GM12878 (cell line): ENCODE measurements at regions of chr7 and their contacts with region 1.

Region 1: GRCh38 chr7:90701021-90701420 is 104.9 kb downstream of the CDK14 start:
- DNase-seq: no peak
- ATAC-seq: peak; percentile 81
- H3K4me3 ChIP-seq: peak overlapping the region; percentile 58; the same call in 1 of the 2 replicates
- H3K27ac ChIP-seq: peak overlapping the region; percentile 47
- H3K4me1 ChIP-seq: peaks cover 4% of the 10 kb centered on the region
- H3K27me3 ChIP-seq: no peaks in the 10 kb centered on the region
- CTCF ChIP-seq: no peak
- EP300 ChIP-seq: no peak
- POLR2A ChIP-seq: no peak
- RAD21 ChIP-seq: no peak

Region 2: GRCh38 chr7:90536449-90536848 is 164.6 kb before region 1 on chr7:
- CTCF ChIA-PET with region 1: no interaction called
- POLR2A ChIA-PET with region 1: no interaction called
- RAD21 ChIA-PET with region 1: no interaction called
- SMC1A ChIA-PET with region 1: no interaction called
- in situ Hi-C with region 1: no loop called
- intact Hi-C with region 1: no loop called
- DNase-seq: peak; percentile 25
- ATAC-seq: peak; percentile 81
- H3K4me3 ChIP-seq: no peak overlapping the region
- H3K27ac ChIP-seq: no peak overlapping the region
- H3K4me1 ChIP-seq: peaks cover 4% of the 10 kb centered on the region; the same call in 1 of the 2 replicates
- H3K27me3 ChIP-seq: no peaks in the 10 kb centered on the region; a peak in 1 of 4 replicates
- CTCF ChIP-seq: no peak
- EP300 ChIP-seq: peak in 1 of 2 experiments; percentile 28; a peak in 1 of 4 replicates
- POLR2A ChIP-seq: no peak
- RAD21 ChIP-seq: no peak

Region 3: DNA sequence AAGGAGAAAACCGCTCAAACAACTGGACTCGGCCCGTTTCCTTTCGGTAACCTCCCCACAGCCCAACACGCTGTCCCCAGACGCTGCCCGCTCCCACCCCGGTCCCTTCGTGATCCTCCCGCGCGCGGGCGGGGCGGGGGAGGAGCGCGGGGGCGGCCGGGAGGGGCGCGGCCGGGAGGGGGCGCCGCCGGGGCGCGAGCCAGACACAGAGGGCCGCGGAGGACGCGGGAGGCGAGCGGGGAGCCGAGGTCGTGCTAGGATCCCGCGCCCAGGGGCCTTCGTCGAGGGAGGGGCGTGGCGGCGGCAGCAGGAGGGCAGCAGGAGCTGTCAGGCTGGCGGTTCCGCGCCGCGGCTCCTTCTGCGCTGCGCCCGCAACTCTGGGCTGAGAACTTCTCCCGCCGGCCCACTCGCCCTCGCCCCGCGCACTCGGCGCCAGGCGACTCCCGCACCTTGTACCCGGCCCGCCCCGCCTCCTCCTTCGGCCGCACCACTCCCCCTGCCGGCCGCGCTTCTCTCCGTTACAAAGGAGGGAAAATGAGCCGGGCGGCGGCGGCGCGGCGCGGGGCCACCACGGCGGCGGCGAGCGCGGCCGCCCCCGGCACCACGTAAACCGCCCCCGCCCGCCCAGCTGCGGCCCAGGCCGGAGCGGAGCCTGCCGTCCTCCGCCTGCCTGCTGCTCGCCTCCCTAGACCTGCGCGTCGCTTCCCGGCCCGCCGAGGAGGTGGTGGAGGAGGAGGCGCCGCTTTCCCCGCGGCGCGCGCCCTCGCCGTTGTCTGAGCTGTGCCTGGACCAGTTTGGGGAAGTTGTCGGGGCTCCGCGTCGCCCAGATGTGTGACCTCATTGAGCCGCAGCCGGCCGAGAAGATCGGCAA is 105.0 kb before region 1 on chr7 and contains the start of gene CDK14:
- CTCF ChIA-PET with region 1: interaction called, 6 read pairs
- POLR2A ChIA-PET with region 1: no interaction called
- RAD21 ChIA-PET with region 1: interaction called, 3 read pairs
- SMC1A ChIA-PET with region 1: interaction called, 10 read pairs
- in situ Hi-C with region 1: no loop called
- intact Hi-C with region 1: loop called (anchors 5 kb)
- DNase-seq: no peak
- ATAC-seq: peak; percentile 58
- H3K4me3 ChIP-seq: peak within 1 kb of the TSS; percentile 92
- H3K27ac ChIP-seq: peak within 1 kb of the TSS; percentile 55
- H3K4me1 ChIP-seq: peaks cover 10% of the 10 kb centered on the region
- H3K27me3 ChIP-seq: no peaks in the 10 kb centered on the region
- CTCF ChIP-seq: peak in 2 of 3 experiments; percentile 29 to 33; a peak in 3 of 6 replicates
- EP300 ChIP-seq: no peak
- POLR2A ChIP-seq: peak; percentile 78
- RAD21 ChIP-seq: peak; percentile 44; the same call in 1 of the 2 replicates
- polyA plus RNA-seq, gene CDK14: 6.5 to 7.3 TPM

Region 4: GRCh38 chr7:90661290-90662151 is 39.5 kb before region 1 on chr7:
- CTCF ChIA-PET with region 1: interaction called, 3 read pairs
- POLR2A ChIA-PET with region 1: no interaction called
- RAD21 ChIA-PET with region 1: interaction called, 3 read pairs
- SMC1A ChIA-PET with region 1: interaction called, 16 read pairs
- in situ Hi-C with region 1: no loop called
- intact Hi-C with region 1: no loop called
- DNase-seq: no peak
- ATAC-seq: peak; percentile 50
- H3K4me3 ChIP-seq: no peak overlapping the region
- H3K27ac ChIP-seq: peak overlapping the region; percentile 11; the same call in 1 of the 2 replicates
- H3K4me1 ChIP-seq: peaks cover 31% of the 10 kb centered on the region
- H3K27me3 ChIP-seq: no peaks in the 10 kb centered on the region
- CTCF ChIP-seq: no peak
- EP300 ChIP-seq: no peak
- POLR2A ChIP-seq: no peak
- RAD21 ChIP-seq: no peak

Region 5: DNA sequence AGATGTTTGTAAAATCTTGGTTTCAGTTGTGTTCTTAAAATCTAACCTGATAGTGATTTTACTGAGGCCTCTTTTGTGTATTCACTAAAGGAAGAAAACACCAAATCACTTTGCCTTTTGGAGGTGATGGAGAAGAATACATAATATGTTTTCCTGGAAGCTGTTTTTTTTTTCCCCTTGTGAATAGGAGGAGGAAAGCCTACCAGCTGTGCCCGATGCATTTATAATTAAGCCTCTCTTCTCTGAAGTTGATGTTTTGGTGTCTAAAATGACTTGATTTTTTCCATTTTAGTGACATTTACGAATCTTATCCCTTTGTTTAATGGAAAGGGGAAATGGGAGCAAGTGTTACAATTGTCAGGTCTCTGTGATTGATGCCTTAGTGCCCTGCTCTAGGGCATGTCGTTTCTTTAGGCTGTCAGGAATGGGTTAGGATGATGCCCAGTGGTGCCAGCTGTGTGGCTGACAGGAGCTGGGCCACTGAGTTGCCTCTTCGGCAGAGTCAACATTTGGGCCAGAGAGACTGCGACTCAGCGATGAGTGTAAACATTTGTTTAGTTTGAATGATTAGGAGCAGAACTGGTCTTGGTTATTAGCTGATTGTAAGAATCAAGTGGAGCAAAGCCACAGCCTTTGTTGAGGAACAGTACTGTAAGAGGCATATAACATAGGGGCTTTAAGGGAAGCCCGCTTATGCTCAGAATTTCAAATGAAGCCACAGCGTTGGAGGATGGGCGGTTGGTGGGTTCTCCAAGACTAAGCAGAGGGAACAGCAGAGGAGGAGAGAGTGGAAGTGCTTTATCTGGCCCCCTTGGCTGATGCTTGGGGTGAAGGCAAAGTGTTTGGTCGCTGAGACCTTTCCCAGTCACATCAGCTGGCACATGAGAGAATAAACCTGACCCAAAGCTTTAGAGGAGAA is 23.3 kb before region 1 on chr7:
- CTCF ChIA-PET with region 1: interaction called, 3 read pairs
- POLR2A ChIA-PET with region 1: no interaction called
- RAD21 ChIA-PET with region 1: no interaction called
- SMC1A ChIA-PET with region 1: interaction called, 10 read pairs
- in situ Hi-C with region 1: no loop called
- intact Hi-C with region 1: no loop called
- DNase-seq: no peak
- ATAC-seq: no peak; the same call in 2 of the 3 replicates
- H3K4me3 ChIP-seq: no peak overlapping the region
- H3K27ac ChIP-seq: no peak overlapping the region
- H3K4me1 ChIP-seq: no peaks in the 10 kb centered on the region
- H3K27me3 ChIP-seq: no peaks in the 10 kb centered on the region
- CTCF ChIP-seq: no peak
- EP300 ChIP-seq: no peak
- POLR2A ChIP-seq: no peak
- RAD21 ChIP-seq: no peak

Region 6: GRCh38 chr7:90690159-90690858 is 10.7 kb before region 1 on chr7:
- CTCF ChIA-PET with region 1: interaction called, 7 read pairs
- POLR2A ChIA-PET with region 1: interaction called, 8 read pairs
- RAD21 ChIA-PET with region 1: interaction called, 8 read pairs
- SMC1A ChIA-PET with region 1: interaction called, 16 read pairs
- in situ Hi-C with region 1: no loop called
- intact Hi-C with region 1: no loop called
- DNase-seq: no peak
- ATAC-seq: peak; percentile 69
- H3K4me3 ChIP-seq: no peak overlapping the region
- H3K27ac ChIP-seq: no peak overlapping the region
- H3K4me1 ChIP-seq: peaks cover 4% of the 10 kb centered on the region; the same call in 1 of the 2 replicates
- H3K27me3 ChIP-seq: no peaks in the 10 kb centered on the region
- CTCF ChIP-seq: peak in 2 of 3 experiments; percentile 10 to 18; a peak in 2 of 6 replicates
- EP300 ChIP-seq: no peak
- POLR2A ChIP-seq: no peak
- RAD21 ChIP-seq: peak; percentile 73

Region 7: GRCh38 chr7:90749262-90749661 is 48.2 kb after region 1 on chr7:
- CTCF ChIA-PET with region 1: interaction called, 11 read pairs
- POLR2A ChIA-PET with region 1: no interaction called
- RAD21 ChIA-PET with region 1: interaction called, 9 read pairs
- SMC1A ChIA-PET with region 1: interaction called, 11 read pairs
- in situ Hi-C with region 1: no loop called
- intact Hi-C with region 1: no loop called
- DNase-seq: no peak
- ATAC-seq: peak; percentile 22; the same call in 1 of the 3 replicates
- H3K4me3 ChIP-seq: no peak overlapping the region
- H3K27ac ChIP-seq: no peak overlapping the region
- H3K4me1 ChIP-seq: no peaks in the 10 kb centered on the region
- H3K27me3 ChIP-seq: no peaks in the 10 kb centered on the region
- CTCF ChIP-seq: no peak
- EP300 ChIP-seq: no peak
- POLR2A ChIP-seq: no peak
- RAD21 ChIP-seq: no peak

Region 8: DNA sequence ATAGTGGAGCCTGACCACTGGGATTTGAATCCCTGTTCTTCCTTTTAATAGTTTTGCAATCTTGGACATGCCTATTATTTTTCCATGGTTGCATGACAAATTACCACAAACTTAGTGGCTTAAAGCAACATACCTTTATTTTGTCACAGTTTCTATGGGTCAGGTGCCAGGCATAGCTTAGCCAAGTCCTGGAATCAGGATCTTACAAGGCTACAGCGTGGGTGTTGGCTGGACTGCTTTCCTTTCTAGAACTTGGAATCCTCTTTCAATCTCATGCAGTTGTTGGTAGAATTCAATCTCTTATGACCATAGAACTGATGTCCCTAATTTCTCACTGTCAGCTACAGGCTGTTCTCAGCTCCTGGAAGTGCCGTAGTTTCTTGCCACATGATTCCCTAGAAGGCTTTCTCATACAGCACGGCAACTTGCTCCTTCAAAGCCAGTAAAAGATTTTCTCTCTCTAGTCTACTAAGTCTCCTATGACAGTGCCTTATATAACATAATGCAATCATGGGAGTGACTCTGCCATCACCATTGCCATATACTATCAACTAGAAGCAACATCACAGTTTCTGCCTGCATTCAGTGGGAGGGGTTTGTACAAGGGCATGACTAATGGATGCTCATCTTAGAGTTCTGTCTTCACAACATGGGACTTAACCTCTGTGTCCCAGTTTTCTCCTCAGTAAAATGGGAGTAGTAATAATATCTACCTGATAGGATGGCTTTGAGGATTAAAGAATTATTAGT is 319.8 kb after region 1 on chr7:
- CTCF ChIA-PET with region 1: no interaction called
- POLR2A ChIA-PET with region 1: no interaction called
- RAD21 ChIA-PET with region 1: interaction called, 3 read pairs
- SMC1A ChIA-PET with region 1: no interaction called
- in situ Hi-C with region 1: loop called (anchors 5 kb)
- intact Hi-C with region 1: no loop called
- DNase-seq: no peak
- ATAC-seq: no peak
- H3K4me3 ChIP-seq: no peak overlapping the region
- H3K27ac ChIP-seq: no peak overlapping the region
- H3K4me1 ChIP-seq: no peaks in the 10 kb centered on the region
- H3K27me3 ChIP-seq: no peaks in the 10 kb centered on the region
- CTCF ChIP-seq: no peak
- EP300 ChIP-seq: no peak
- POLR2A ChIP-seq: no peak
- RAD21 ChIP-seq: no peak